PC-9 (cell line): ENCODE measurements at regions of chr10 and their contacts with region 1.

Region 1: DNA sequence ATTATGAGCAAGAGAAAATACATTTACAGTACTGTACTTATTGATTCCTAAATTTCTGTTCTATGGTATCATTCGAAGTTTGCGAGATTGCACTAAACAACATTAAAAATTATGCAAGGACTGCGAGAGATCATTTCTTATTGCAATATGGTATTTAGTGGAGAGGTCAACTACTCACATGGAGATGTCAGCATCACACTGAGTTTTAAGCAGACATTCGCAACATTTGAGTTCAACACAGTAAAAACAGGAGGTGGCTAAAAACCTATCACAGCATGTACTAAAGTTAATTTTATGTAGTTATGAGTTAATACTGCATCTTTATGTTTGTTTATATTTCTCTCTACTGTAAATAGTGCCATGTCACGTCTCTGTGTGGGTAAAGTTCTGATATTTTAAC is 53.5 kb downstream of the JMJD1C start:
- DNase-seq: no peak
- H3K4me3 ChIP-seq: no peak overlapping the region
- H3K27ac ChIP-seq: no peak overlapping the region
- H3K4me1 ChIP-seq: no peaks in the 10 kb centered on the region
- H3K27me3 ChIP-seq: no peaks in the 10 kb centered on the region
- CTCF ChIP-seq: no peak

Region 2: GRCh38 chr10:63528084-63528747 is 115.9 kb after region 1 on chr10:
- CTCF ChIA-PET with region 1: interaction called, 10 read pairs
- POLR2A ChIA-PET with region 1: no interaction called
- intact Hi-C with region 1: no loop called
- DNase-seq: no peak
- H3K4me3 ChIP-seq: no peak overlapping the region
- H3K27ac ChIP-seq: 0 out of 2 replicates have a peak overlapping the region, but pooled peaks have one; percentile 10
- H3K4me1 ChIP-seq: peaks cover 5% of the 10 kb centered on the region
- H3K27me3 ChIP-seq: no peaks in the 10 kb centered on the region
- CTCF ChIP-seq: no peak